Activated T-helper 1 cell treated with anti-CD3 and anti-CD28 coated beads, Interleukin-12 subunit alpha, Interleukin-12 subunit beta, Interleukin-2, Interleukin-4 antibody, amounts not matched to agents 30 ng/mL and 10 ng/mL and 1 ng/mL, durations not matched to agents 14 hours and 24 hours and 36 hours (primary cell): ENCODE measurements at regions of chr14 and their contacts with region 1.

Region 1: DNA sequence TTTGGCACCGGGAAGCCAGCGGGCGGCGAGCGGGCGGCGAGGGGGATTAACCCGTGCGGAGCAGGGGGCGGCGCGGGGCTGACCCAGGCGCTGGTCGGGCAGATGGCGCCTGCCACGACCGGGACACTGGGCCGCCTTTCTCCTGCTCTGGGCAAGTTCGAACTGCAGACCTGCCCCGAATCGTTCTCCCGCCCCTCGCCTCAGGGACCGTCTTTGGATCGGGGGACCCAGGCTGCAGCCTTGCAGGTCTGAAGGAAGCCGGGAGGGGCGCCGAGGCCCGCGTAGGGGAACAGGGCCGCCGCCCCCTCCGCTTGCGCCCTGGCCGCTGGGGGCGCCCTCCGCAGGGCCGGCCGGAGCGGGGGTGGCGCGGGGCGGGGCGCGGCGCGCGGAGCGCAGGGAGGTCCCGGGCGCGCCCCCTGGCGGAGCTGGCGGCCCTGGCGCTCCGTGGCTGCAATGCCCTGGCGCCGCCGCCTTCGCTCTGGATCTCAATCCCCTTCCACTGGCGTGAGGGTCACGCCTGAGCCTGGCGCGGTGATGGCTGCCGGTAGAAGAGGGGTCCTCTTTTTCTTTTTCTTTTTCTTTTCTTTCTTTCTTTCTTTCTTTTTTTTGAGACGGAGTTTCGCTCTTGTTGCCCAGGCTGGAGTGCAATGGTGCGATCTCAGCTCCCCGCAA is 449 bp upstream of the LTBP2 start:
- DNase-seq: peak; percentile 80
- H3K4me3 Mint-ChIP-seq: peak overlapping the region; percentile 73
- H3K27ac Mint-ChIP-seq: no peak overlapping the region
- H3K4me1 Mint-ChIP-seq: peaks cover 48% of the 10 kb centered on the region
- H3K27me3 Mint-ChIP-seq: peaks cover 43% of the 10 kb centered on the region

Region 2: GRCh38 chr14:74362361-74362915 is 250.0 kb before region 1 on chr14:
- intact Hi-C with region 1: loop called (anchors 1 kb)
- DNase-seq: peak; percentile 34
- H3K4me3 Mint-ChIP-seq: no peak overlapping the region
- H3K27ac Mint-ChIP-seq: no peak overlapping the region
- H3K4me1 Mint-ChIP-seq: no peaks in the 10 kb centered on the region
- H3K27me3 Mint-ChIP-seq: peaks cover 15% of the 10 kb centered on the region

Region 3: GRCh38 chr14:74401504-74402241 is 210.8 kb before region 1 on chr14:
- intact Hi-C with region 1: no loop called
- DNase-seq: peak; percentile 67
- H3K4me3 Mint-ChIP-seq: peak overlapping the region; percentile 50
- H3K27ac Mint-ChIP-seq: peak overlapping the region; percentile 76
- H3K4me1 Mint-ChIP-seq: peaks cover 24% of the 10 kb centered on the region
- H3K27me3 Mint-ChIP-seq: peaks cover 15% of the 10 kb centered on the region

Region 4: GRCh38 chr14:74793506-74794168 is 181.2 kb after region 1 on chr14:
- intact Hi-C with region 1: loop called (anchors 1 kb)
- DNase-seq: no peak
- H3K4me3 Mint-ChIP-seq: peak overlapping the region; percentile 79
- H3K27ac Mint-ChIP-seq: peak overlapping the region; percentile 50
- H3K4me1 Mint-ChIP-seq: peaks cover 52% of the 10 kb centered on the region
- H3K27me3 Mint-ChIP-seq: no peaks in the 10 kb centered on the region

Region 5: DNA sequence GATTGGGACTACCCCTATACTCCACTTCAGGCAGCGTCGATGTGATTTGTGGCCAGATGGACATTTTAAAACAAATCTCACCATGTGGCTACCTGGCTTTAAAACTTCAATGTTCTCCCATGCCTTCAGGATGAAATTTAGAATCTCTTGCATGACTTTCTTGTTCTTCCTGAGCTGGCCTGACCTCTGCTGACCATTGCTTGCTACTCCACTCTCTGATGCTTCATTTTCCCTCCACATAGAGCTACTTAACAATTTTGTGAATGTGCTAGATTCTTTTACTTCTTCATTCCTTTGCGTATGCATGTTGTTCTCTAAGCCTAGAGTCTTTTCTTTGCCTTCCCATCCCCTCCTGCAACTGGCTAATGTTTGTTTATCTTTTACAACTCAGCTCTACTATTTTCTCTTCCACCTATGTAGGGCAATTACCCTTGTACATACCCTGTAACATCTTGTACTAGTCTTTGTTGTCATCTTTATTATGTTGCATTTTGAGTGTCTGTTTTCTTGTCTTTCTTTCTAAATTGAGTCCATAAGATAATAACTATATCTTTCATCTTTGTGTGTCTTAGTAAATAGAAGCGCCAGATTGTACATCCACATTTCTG is 191.8 kb after region 1 on chr14:
- intact Hi-C with region 1: loop called (anchors 1 kb)
- DNase-seq: peak; percentile 11
- H3K4me3 Mint-ChIP-seq: no peak overlapping the region
- H3K27ac Mint-ChIP-seq: no peak overlapping the region
- H3K4me1 Mint-ChIP-seq: no peaks in the 10 kb centered on the region
- H3K27me3 Mint-ChIP-seq: no peaks in the 10 kb centered on the region

Region 6: DNA sequence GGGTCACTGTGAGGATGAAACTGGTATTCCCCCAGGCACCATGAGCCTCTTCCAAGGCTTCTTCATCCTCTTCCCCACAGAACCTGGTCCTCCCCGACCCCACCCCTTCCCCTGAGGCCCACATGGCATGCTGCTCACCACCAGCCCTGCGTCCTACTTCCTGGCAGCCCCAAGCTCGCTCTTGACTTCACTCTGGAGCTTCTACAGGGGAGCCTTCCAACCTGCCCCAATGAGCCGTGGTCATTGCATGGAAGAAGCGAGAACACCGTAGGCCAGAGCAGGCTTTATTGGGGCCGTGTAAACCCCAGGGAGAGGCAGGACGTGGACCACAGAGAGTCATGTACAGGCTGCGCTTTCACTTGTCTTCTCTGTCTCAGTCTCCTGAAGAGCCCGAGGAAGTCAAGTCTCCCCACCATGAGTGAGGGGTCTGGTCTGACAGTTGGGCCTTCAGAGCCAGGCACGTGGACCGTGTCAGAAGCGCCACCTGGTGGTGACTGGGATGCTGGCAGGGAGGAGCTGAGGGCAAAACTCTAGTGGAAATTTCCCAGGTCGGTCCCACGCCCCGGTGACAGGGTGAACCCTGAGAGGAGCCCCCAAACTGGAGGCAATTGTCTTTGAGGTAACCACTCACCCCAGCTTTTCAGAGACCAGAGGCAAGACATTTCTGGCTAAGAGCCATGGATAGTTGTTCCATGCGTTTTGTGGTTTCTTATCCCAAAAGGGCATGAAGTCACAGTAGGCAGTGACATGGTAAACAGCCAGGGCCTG is 293.1 kb after region 1 on chr14:
- intact Hi-C with region 1: loop called (anchors 1 kb)
- DNase-seq: peak; percentile 61
- H3K4me3 Mint-ChIP-seq: no peak overlapping the region
- H3K27ac Mint-ChIP-seq: peak overlapping the region; percentile 40
- H3K4me1 Mint-ChIP-seq: peaks cover 5% of the 10 kb centered on the region
- H3K27me3 Mint-ChIP-seq: no peaks in the 10 kb centered on the region